A673 (cell line): ENCODE measurements at regions of chr9 and their contacts with region 1.

Region 1: DNA sequence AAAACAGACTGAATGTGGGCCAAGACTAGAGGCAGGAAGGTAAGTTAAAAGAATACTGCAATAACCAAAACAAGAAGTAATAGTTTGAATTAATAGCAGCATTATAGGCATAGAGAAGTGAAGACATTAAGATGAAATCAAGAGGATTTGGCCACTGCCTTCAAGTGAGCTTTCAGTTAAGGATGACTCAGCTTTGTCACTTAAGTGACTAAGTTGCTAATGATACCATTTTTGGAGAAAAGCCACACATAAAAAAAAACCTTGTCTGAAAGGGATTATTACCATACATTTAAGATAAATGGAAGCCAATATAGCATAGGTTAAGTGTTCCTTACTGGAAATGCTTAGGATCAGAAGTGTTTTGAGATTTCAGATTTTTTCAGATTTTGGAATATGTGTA is 57.0 kb downstream of the ECPAS start:
- DNase-seq: peak; percentile 82
- H3K4me3 ChIP-seq: no peak overlapping the region
- H3K27ac ChIP-seq: peak overlapping the region; percentile 37
- H3K4me1 ChIP-seq: peaks cover 11% of the 10 kb centered on the region
- H3K27me3 ChIP-seq: no peaks in the 10 kb centered on the region
- CTCF ChIP-seq: no peak

Region 2: DNA sequence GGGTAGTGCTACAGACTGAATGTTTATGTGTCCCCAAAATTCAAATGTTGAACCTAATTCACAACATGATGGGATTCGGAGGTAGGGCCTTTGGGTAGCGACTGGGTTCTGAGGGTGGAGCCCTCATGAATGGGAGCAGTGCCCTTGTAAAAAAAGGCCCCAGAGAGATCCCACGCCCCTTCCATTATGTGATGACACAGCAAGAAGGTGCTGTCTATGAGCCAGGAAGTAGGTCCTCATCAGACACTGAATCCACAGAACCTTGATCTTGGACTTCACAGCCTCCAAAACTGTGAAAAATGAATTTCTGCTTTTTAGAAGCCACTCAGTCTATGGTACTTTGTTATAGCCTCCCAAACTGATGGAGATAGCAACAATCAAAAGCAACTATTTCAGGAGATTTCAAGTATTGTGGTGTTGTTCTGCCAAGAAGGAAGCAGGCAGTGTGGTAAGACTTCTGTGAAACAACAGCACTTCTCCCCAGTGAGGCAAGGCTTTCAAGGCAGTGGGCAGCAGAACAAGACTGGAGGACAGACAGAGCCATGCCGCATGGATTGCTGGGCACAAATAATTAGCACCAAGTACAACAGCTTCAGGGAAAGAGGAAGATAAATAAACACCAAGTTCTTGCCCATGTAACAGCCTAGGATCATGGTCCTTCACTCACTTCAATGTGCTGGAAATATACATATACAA is 173.3 kb before region 1 on chr9:
- CTCF ChIA-PET with region 1: no interaction called
- POLR2A ChIA-PET with region 1: no interaction called
- intact Hi-C with region 1: no loop called
- DNase-seq: no peak
- H3K4me3 ChIP-seq: no peak overlapping the region
- H3K27ac ChIP-seq: no peak overlapping the region
- H3K4me1 ChIP-seq: no peaks in the 10 kb centered on the region
- H3K27me3 ChIP-seq: no peaks in the 10 kb centered on the region
- CTCF ChIP-seq: no peak

Region 3: DNA sequence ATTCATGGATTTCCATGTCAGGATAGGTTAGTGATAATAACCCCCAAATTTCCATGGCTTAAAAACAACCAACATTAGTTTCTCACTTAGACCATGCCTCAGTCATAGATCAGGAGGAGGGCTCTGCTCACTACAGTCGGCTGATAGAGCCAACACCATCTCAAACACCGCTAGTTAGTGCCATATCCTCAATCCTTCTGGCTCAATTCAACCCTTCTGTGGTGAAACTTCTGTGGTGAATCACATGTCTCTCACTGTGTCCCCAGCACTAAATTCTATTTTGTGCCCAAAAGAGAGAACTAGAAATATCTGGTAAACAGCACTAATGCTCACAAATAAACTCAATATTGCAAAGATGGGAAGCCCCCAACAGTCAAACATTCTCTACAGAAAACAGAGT is 35.9 kb after region 1 on chr9:
- CTCF ChIA-PET with region 1: no interaction called
- POLR2A ChIA-PET with region 1: no interaction called
- intact Hi-C with region 1: no loop called
- DNase-seq: no peak
- H3K4me3 ChIP-seq: no peak overlapping the region
- H3K27ac ChIP-seq: no peak overlapping the region
- H3K4me1 ChIP-seq: peaks cover 9% of the 10 kb centered on the region
- H3K27me3 ChIP-seq: no peaks in the 10 kb centered on the region
- CTCF ChIP-seq: no peak

Region 4: GRCh38 chr9:111483862-111484571 is 56.8 kb after region 1 on chr9 and contains the start of gene ECPAS:
- CTCF ChIA-PET with region 1: no interaction called
- POLR2A ChIA-PET with region 1: no interaction called
- intact Hi-C with region 1: loop called (anchors 2 kb)
- DNase-seq: peak; percentile 81
- H3K4me3 ChIP-seq: peak within 1 kb of the TSS; percentile 100
- H3K27ac ChIP-seq: peak within 1 kb of the TSS; percentile 98
- H3K4me1 ChIP-seq: peaks cover 17% of the 10 kb centered on the region
- H3K27me3 ChIP-seq: no peaks in the 10 kb centered on the region
- CTCF ChIP-seq: no peak
- total RNA-seq, gene ECPAS: 116 and 124 TPM in 2 replicates